ENCODE measurements at regions of chr17 and their contacts with region 1.

Region 1: DNA sequence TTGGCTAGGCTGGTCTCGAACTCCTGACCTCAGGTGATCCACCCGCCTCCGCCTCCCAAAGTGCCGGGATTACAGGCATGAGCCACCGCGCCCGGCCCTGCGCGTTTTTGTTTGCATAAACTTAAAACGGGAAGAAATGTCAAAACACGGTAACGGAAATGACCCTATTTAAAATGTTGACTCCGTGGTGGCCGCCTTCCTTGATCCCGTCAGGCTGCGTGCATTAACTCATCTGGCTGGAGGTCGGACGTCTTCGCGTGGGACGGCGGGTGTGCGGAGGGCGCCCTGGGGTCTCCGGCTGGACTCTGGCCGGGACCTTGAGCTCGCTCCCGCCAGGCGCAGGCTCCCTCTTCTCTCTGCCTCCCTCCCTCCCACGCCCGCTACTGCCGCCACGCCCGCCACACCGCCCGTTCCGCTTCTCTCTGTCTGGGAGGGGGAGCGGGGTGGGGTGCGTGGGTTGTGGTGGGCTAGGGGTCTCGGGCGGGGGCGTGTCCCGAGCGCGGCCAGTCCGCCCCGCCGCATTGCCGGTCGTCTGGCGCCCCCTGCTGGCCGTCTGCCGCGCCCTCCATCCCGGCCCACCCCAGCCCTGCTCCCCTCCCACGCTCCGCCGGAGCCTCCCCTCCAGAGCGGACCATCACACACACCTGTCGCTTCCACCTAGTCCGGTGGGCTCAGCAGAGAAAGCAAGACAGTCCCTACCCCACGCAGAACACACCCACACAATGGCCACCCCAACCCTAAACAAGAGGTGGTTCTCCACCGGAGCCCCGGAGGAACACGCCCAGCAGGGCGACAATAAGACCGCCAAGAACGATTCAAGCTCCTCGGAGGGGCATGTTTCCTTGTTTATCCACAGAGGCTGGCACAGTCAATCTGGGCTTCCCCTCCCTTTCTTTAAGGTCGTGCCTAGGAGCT is 1.2 kb upstream of the CCDC42 start:
- DNase-seq: peak; percentile 30 to 87
- H3K4me3 ChIP-seq: peak overlapping the region; percentile 61 to 77
- H3K27ac ChIP-seq: peak overlapping the region; percentile 80 to 84
- H3K4me1 ChIP-seq: peaks cover 4 to 12% of the 10 kb centered on the region in 2 donors
- H3K27me3 ChIP-seq: no peaks in the 10 kb centered on the region
- CTCF ChIP-seq: peak; percentile 92 to 100 (median 95)

Region 2: GRCh38 chr17:8409966-8410864 is 335.6 kb before region 1 on chr17:
- intact Hi-C with region 1: loop called (anchors 2 kb)
- DNase-seq: peak; percentile 31 to 93
- H3K4me3 ChIP-seq: no peak overlapping the region
- H3K27ac ChIP-seq: no peak overlapping the region
- H3K4me1 ChIP-seq: no peaks in the 10 kb centered on the region
- H3K27me3 ChIP-seq: no peaks in the 10 kb centered on the region
- CTCF ChIP-seq: peak; percentile 75 to 84 (median 77)

Region 3: DNA sequence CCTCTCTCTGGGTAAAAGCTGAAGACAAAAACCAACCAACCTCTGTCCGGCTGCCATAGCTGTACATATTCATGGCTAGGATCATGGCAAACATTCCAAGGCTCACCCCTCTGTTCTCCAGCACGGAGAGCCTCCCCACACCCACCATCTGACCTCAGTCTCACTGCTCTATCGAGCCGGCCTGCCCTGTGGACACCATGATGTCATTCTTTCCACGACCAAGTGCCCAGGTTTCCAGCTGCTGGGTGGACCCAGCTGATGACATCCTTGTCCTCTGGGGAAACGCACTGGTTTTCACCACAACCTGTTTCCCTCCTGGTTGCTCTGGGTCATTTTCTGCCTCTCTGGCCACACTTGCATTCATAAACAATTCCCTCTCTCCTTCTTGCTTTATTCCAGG is 242.5 kb before region 1 on chr17:
- intact Hi-C with region 1: loop called (anchors 5 kb)
- DNase-seq: peak in 1 of 2 donors; percentile 84
- H3K4me3 ChIP-seq: no peak overlapping the region
- H3K27ac ChIP-seq: peak overlapping the region; percentile 69 to 78
- H3K4me1 ChIP-seq: peaks cover 0 to 12% of the 10 kb centered on the region in 2 donors
- H3K27me3 ChIP-seq: no peaks in the 10 kb centered on the region
- CTCF ChIP-seq: no peak

Region 4: DNA sequence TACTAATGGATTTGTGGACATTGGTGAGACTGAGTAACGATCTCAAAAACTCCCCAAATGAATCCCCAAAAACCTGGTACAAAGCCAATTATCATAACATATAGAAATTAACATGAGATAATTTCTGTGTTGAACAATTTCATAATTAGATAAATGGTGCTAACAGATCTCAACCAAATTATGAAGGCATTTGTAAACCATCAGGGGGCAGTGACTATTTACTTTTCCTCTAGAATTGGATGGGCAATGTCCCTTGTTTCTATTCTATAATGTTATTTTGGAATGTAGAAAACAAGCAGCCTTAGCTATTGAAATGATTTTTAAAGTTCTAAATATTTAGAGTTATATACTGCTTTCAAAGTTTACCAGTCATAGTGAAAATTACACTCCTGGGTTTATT is 173.1 kb before region 1 on chr17:
- intact Hi-C with region 1: loop called (anchors 5 kb)
- DNase-seq: no peak
- H3K4me3 ChIP-seq: no peak overlapping the region
- H3K27ac ChIP-seq: peak overlapping the region; percentile 54 to 64
- H3K4me1 ChIP-seq: peaks cover 4 to 20% of the 10 kb centered on the region in 2 donors
- H3K27me3 ChIP-seq: no peaks in the 10 kb centered on the region
- CTCF ChIP-seq: no peak

Region 5: DNA sequence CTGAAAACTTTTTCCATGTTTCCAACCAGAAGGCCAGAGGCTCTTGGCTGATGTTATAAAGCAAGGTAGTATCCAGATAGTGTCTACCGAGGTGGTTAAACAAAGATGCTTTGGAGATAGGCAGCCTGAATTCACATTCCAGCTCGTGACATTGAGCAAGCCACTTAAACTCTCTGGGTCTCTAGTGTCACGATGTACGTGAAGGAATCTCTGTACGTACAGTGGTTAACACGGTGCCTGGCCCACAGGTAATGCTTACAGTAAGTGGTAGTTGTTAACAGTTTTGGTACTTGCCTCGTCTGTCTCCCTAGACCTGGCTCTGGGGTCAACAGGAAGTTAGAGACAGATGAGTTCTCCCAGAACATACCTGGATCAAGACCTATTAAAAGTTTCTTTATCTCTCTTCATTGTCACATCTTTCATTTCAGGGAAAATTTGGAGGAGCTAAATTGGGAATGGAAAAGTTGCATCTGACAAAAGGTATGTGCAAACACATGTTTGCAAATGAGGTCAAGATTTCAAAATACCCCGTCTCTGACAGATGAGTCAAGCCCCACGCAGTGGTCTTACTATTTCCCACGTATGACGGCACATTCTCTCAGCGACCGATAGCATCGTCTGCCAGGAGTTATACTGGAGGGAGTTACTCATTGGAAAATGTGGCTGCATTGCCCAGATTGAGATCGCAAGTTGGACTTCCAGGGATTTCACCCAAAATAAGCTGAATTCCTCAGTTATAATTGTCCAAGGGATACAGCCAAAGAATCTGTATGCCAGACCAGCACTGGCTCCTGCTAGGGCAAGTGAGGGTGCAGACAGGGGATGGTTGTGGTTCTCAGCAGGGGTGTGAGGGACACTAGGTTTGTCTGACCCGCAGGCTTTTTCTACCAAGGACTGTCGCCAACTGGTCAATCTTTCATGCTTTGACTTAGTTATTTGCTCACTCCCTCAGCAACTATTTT is 96.4 kb before region 1 on chr17:
- intact Hi-C with region 1: loop called (anchors 5 kb)
- DNase-seq: peak; percentile 76 to 96
- H3K4me3 ChIP-seq: no peak overlapping the region
- H3K27ac ChIP-seq: peak overlapping the region; percentile 89 to 98
- H3K4me1 ChIP-seq: peaks cover 6 to 32% of the 10 kb centered on the region in 2 donors
- H3K27me3 ChIP-seq: no peaks in the 10 kb centered on the region
- CTCF ChIP-seq: no peak

Region 6: GRCh38 chr17:8673612-8674011 is 72.2 kb before region 1 on chr17:
- intact Hi-C with region 1: loop called (anchors 2 kb)
- DNase-seq: peak in 1 of 2 donors; percentile 85
- H3K4me3 ChIP-seq: peak overlapping the region in 1 of 2 donors; percentile 38
- H3K27ac ChIP-seq: peak overlapping the region; percentile 93 to 95
- H3K4me1 ChIP-seq: peaks cover 9 to 55% of the 10 kb centered on the region in 2 donors
- H3K27me3 ChIP-seq: no peaks in the 10 kb centered on the region
- CTCF ChIP-seq: no peak